ENCODE measurements at regions of chr17 and their contacts with region 1.

Region 1: DNA sequence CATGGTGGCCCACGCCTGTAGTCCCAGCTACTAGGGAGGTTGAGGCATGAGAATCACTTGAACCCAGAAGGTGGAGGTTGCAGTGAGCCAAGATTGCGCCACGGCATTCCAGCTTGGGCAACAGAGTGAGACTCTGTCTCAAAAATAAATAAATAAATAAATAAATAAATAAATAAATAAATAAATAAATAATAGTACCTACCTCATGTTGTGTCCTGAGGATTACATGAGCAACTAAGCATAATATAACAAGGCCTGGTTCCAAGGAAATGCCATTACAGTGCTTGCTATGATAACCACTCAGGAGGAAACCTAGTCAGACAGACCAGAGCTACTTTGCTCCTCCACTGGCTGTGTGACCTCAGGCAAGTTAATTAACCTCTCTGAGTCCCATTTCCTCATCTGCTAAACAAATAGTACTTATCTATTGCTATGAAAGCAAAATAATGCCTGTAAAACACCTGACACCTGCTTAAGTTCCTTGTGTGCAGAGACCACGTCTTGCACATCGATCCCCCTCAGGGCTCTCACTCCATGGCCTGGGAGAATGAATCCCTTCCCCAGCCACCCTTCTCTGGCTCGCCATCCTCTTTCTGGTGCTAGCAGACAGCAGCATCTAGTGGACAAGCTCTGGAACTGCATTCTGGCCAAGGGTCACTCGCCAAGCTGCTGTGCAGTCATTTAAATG is 7.5 kb downstream of the EPOP start:
- DNase-seq: peak; percentile 55 to 78 (median 73)
- ATAC-seq: peak; percentile 46 to 72
- H3K4me3 ChIP-seq: no peak overlapping the region
- H3K27ac ChIP-seq: no peak overlapping the region
- H3K4me1 ChIP-seq: no peaks in the 10 kb centered on the region
- H3K27me3 ChIP-seq: no peaks in the 10 kb centered on the region

Region 2: GRCh38 chr17:38428112-38428642 is 239.1 kb before region 1 on chr17 and contains the start of gene ARHGAP23:
- intact Hi-C with region 1: loop called in 1 of 4 experiments (anchors 10 kb)
- DNase-seq: peak; percentile 78 to 90 (median 89)
- ATAC-seq: peak; percentile 58 to 64
- H3K4me3 ChIP-seq: peak within 1 kb of the TSS; percentile 90
- H3K27ac ChIP-seq: peak within 1 kb of the TSS; percentile 90
- H3K4me1 ChIP-seq: peaks cover 14% of the 10 kb centered on the region
- H3K27me3 ChIP-seq: no peaks in the 10 kb centered on the region
- total RNA-seq, gene ARHGAP23: 61.8 to 96.9 (median 77.4) TPM

Region 3: GRCh38 chr17:38509008-38509771 is 158.1 kb before region 1 on chr17:
- intact Hi-C with region 1: loop called in 3 of 4 experiments (anchors 5 to 10 kb)
- DNase-seq: peak; percentile 85 to 92 (median 92)
- ATAC-seq: peak; percentile 68 to 71
- H3K4me3 ChIP-seq: no peak overlapping the region
- H3K27ac ChIP-seq: no peak overlapping the region
- H3K4me1 ChIP-seq: peaks cover 7% of the 10 kb centered on the region
- H3K27me3 ChIP-seq: no peaks in the 10 kb centered on the region

Region 4: GRCh38 chr17:38557836-38558727 is 109.2 kb before region 1 on chr17:
- intact Hi-C with region 1: loop called in 3 of 4 experiments (anchors 5 to 10 kb)
- DNase-seq: peak; percentile 92 to 97 (median 96)
- ATAC-seq: peak; percentile 89 to 93
- H3K4me3 ChIP-seq: peak overlapping the region; percentile 43
- H3K27ac ChIP-seq: no peak overlapping the region
- H3K4me1 ChIP-seq: peaks cover 4% of the 10 kb centered on the region
- H3K27me3 ChIP-seq: no peaks in the 10 kb centered on the region

Region 5: GRCh38 chr17:38617011-38617867 is 50.0 kb before region 1 on chr17:
- intact Hi-C with region 1: loop called in 1 of 4 experiments (anchors 10 kb)
- DNase-seq: no peak
- ATAC-seq: no peak
- H3K4me3 ChIP-seq: no peak overlapping the region
- H3K27ac ChIP-seq: no peak overlapping the region
- H3K4me1 ChIP-seq: no peaks in the 10 kb centered on the region
- H3K27me3 ChIP-seq: no peaks in the 10 kb centered on the region